ENCODE measurements at regions of chr2 and their contacts with region 1.

Region 1: GRCh38 chr2:43075054-43075593 is 151.3 kb downstream of the ZFP36L2 start:
- DNase-seq: peak; percentile 95
- H3K4me3 ChIP-seq: no peak overlapping the region
- H3K27ac ChIP-seq: peak overlapping the region; percentile 70 to 81 (median 78)
- H3K4me1 ChIP-seq: peaks cover 0 to 54% (median 40%) of the 10 kb centered on the region in 4 donors
- H3K27me3 ChIP-seq: no peaks in the 10 kb centered on the region
- CTCF ChIP-seq: no peak
- EP300 ChIP-seq: peak in 2 of 4 donors; percentile 28 to 61
- POLR2A ChIP-seq: no peak

Region 2: GRCh38 chr2:43032213-43033015 is 42.7 kb before region 1 on chr2:
- intact Hi-C with region 1: loop called (anchors 5 kb)
- DNase-seq: peak; percentile 88
- H3K4me3 ChIP-seq: no peak overlapping the region
- H3K27ac ChIP-seq: peak overlapping the region; percentile 52 to 65 (median 60)
- H3K4me1 ChIP-seq: peaks cover 0 to 18% (median 16%) of the 10 kb centered on the region in 4 donors
- H3K27me3 ChIP-seq: no peaks in the 10 kb centered on the region
- CTCF ChIP-seq: no peak
- EP300 ChIP-seq: peak in 1 of 4 donors; percentile 11
- POLR2A ChIP-seq: peak in 1 of 2 donors; percentile 24

Measured in sigmoid colon (tissue), 7 donors.